ENCODE measurements at regions of chr16 and their contacts with region 1.

Region 1: GRCh38 chr16:53549970-53550690 is 47.1 kb upstream of the AKTIP start:
- DNase-seq: peak; percentile 51
- H3K4me3 ChIP-seq: peak overlapping the region; percentile 29
- CTCF ChIP-seq: peak; percentile 63

Region 2: DNA sequence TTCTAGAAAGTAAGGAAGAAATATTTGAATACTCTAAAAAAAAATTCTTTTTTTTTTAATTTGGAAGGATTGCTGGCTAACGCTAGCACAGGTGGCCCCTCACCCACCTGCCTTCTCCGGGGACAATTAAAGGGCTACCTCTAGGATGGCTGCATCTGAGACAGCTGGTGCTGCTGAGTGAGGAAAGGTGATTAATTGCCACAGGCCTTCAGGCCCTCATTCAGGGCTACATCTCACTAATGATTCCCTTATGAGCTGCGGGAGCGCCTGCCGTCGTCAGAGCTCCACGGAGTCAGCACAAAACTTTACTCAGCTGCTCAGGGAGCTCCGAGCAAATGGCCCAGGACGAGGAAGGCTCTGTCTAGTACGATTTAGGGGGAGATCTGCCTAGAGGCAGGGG is 20.1 kb before region 1 on chr16:
- CTCF ChIA-PET with region 1: interaction called, 10 read pairs
- POLR2A ChIA-PET with region 1: no interaction called
- DNase-seq: no peak
- H3K4me3 ChIP-seq: no peak overlapping the region
- CTCF ChIP-seq: no peak

Region 3: DNA sequence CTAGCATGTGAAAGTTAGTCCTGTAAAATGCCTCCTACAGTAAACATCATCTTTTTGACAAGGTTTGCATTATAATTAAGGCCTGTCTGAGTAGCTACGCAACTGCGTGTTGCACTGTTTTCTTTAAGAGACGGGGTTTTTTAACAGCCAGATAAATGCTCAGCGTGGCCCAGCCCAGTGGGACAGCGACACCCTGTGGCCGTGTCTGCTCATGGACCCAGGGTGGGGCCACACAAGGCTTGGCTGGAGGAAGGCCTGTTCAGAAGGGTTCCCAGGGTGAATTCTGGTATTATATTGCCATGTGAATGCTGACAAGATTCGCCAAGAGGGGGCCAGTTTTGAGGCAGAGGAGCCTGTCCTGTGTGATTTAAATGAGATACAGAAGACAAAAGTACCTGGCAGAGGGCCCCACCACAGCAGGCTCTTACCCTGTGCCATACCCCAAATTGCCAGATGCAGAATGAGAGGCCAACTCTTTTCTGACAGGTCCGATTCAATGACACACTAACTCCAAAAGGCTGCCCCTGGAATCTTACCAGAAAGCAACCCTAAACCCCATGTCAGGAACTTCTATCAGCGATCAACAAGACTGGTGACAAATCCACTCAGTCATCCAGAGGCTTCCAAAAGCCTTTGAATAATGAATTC is 1708.0 kb after region 1 on chr16:
- CTCF ChIA-PET with region 1: interaction called, 14 read pairs
- POLR2A ChIA-PET with region 1: no interaction called
- DNase-seq: no peak
- H3K4me3 ChIP-seq: no peak overlapping the region
- CTCF ChIP-seq: peak; percentile 75